ENCODE measurements at regions of chr9 and their contacts with region 1.

Region 1: GRCh38 chr9:98860871-98861293 is 53.4 kb downstream of the GALNT12 start:
- DNase-seq: peak; percentile 55 to 88
- ATAC-seq: peak; percentile 69 to 91 (median 88)
- H3K4me3 ChIP-seq: no peak overlapping the region
- H3K27ac ChIP-seq: peak overlapping the region in 8 of 10 donors; percentile 20 to 90 (median 82)
- H3K4me1 ChIP-seq: peaks cover 2 to 64% (median 45%) of the 10 kb centered on the region in 9 donors
- H3K27me3 ChIP-seq: no peaks in the 10 kb centered on the region
- CTCF ChIP-seq: peak; percentile 17 to 89 (median 65)

Region 2: GRCh38 chr9:98916660-98917059 is 55.8 kb after region 1 on chr9:
- intact Hi-C with region 1: loop called in 3 of 10 experiments (anchors 5 to 10 kb)
- DNase-seq: peak; percentile 59 to 63
- ATAC-seq: peak; percentile 78 to 91 (median 86)
- H3K4me3 ChIP-seq: no peak overlapping the region
- H3K27ac ChIP-seq: peak overlapping the region in 9 of 10 donors; percentile 1 to 92 (median 73)
- H3K4me1 ChIP-seq: peaks cover 10 to 37% (median 24%) of the 10 kb centered on the region in 9 donors
- H3K27me3 ChIP-seq: no peaks in the 10 kb centered on the region
- CTCF ChIP-seq: peak in 3 of 9 donors; percentile 10 to 16 (median 12)

Region 3: DNA sequence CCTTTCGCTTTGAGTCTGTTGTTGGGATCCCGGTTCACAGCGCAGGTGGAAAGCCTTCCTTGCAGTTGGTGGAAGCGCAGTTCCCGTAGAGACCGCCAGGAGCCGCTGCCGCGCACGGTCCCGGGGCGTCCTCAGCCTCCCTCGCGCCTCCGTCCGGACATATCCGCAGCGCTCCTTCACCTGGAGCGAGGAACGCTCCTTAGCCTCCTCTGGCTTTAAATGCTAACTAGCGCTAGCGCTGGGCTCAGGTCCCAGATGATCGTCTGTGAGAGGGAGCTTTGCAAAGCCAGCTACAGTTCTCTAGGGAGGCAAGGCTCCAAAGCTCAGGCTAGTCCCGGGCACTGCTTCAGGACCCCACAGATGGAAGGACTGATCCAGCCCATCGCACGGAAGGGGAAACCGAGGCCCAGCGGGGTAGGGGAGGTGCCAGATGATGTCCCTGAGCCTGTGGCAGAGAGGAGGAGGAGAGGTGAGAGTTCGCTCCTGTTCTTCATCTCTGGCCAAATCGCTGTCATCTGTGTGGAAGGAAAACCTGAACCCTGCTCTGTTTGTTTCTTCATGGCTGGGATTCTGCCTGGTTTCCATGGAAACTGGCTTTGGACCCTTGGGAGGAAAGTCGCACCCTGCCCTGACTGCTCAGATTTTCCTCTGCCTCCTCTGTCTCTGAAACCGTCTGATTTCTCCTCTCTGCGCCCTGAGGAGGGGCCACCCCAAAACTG is 114.3 kb after region 1 on chr9:
- intact Hi-C with region 1: loop called in 6 of 10 experiments (anchors 2 to 5 kb)
- DNase-seq: peak; percentile 87 to 91
- ATAC-seq: peak; percentile 60 to 80 (median 72)
- H3K4me3 ChIP-seq: peak overlapping the region in 9 of 10 donors; percentile 2 to 44 (median 34)
- H3K27ac ChIP-seq: peak overlapping the region; percentile 20 to 92 (median 72)
- H3K4me1 ChIP-seq: peaks cover 33 to 100% (median 80%) of the 10 kb centered on the region in 9 donors
- H3K27me3 ChIP-seq: peaks cover 0 to 15% (median 0%) of the 10 kb centered on the region in 7 donors
- CTCF ChIP-seq: peak; percentile 98 to 100 (median 99)

Region 4: DNA sequence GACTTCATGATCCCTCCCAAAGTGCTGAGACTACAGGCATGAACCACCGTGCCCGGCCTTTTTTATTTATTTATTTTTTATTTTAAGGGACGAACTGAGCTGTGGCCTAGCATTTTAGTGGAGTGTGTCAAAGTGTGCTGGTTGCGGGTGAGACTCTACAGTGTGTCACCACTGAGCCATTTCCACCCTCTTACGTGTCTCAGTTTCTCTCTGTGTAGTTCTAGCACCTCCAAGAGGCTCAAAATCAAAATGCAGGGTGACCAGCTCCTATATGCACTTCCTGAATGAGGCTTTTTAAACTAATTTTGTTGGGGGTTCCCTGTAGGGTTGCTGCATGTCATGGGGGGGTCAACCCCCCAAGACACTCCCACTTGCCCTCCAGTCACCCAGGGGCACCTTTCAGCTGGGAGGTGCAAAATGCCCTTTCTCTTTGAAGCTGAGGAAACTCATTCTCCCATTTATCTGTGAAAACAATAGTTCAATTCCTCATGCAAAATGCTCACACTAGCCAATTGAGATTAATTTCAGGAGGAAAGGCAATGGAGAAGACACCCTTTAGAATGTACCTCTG is 152.1 kb after region 1 on chr9:
- intact Hi-C with region 1: loop called in 3 of 10 experiments (anchors 5 to 10 kb)
- DNase-seq: no peak
- ATAC-seq: peak; percentile 58 to 89 (median 78)
- H3K4me3 ChIP-seq: no peak overlapping the region
- H3K27ac ChIP-seq: peak overlapping the region in 1 of 10 donors; percentile 24
- H3K4me1 ChIP-seq: peaks cover 0 to 6% (median 0%) of the 10 kb centered on the region in 9 donors
- H3K27me3 ChIP-seq: no peaks in the 10 kb centered on the region
- CTCF ChIP-seq: peak; percentile 29 to 69 (median 60)

Region 5: GRCh38 chr9:99140685-99141314 is 279.9 kb after region 1 on chr9:
- intact Hi-C with region 1: loop called in 7 of 10 experiments (anchors 1 to 10 kb)
- DNase-seq: peak in 1 of 2 donors; percentile 41
- ATAC-seq: peak; percentile 69 to 89 (median 86)
- H3K4me3 ChIP-seq: no peak overlapping the region
- H3K27ac ChIP-seq: peak overlapping the region in 1 of 10 donors; percentile 21
- H3K4me1 ChIP-seq: peaks cover 0 to 36% (median 17%) of the 10 kb centered on the region in 9 donors
- H3K27me3 ChIP-seq: no peaks in the 10 kb centered on the region
- CTCF ChIP-seq: peak; percentile 76 to 96 (median 86)